ENCODE measurements at regions of chr17 and their contacts with region 1.

Region 1: DNA sequence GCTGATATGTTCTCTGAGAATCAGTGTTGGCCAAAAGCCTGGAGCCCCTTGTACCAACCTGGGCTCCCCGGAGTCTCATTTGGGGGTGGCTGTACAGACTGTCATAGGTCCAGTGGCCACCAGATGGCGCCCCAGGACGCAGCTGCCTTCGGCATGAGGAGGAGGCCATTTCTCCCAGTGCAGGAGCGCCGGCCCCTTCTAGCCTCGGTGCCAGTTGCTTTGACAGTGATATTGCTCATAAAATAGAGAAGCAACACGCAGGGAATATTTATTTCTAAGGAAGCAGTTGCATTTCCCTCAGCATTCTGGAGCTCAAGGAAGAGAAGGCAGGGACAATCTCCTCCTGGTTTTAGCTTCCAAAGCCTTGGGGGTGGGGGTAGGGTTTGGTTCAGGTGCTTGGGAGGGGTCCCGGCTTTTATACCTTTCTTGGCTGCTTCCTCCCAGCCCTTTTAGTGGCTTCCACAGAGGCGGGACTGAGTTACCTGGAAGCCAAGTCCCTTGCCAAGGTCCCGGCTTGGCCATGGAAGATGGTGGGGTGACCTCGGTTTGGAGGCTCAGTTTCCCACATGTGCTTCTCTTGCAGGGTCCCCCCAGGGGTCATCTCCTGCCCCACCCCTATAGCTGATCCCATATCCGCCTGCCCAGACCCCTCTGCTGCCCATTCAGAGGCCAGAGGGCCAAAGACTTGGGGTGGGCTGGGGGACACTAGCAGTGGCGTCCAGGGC is 117.8 kb upstream of the CDC42EP4 start:
- DNase-seq: peak; percentile 62
- ATAC-seq: peak; percentile 99
- H3K4me3 ChIP-seq: no peak overlapping the region; a peak in 1 of 4 replicates
- H3K27ac ChIP-seq: no peak overlapping the region
- H3K4me1 ChIP-seq: peaks cover 0 to 4% of the 10 kb centered on the region in 2 experiments; a peak in 2 of 4 replicates
- H3K27me3 ChIP-seq: 0 out of 2 replicates have a peak, but pooled peaks cover 4% of the 10 kb centered on the region
- CTCF ChIP-seq: peak; percentile 92 to 100 (median 100)
- POLR2A ChIP-seq: no peak
- RAD21 ChIP-seq: peak; percentile 98

Region 2: DNA sequence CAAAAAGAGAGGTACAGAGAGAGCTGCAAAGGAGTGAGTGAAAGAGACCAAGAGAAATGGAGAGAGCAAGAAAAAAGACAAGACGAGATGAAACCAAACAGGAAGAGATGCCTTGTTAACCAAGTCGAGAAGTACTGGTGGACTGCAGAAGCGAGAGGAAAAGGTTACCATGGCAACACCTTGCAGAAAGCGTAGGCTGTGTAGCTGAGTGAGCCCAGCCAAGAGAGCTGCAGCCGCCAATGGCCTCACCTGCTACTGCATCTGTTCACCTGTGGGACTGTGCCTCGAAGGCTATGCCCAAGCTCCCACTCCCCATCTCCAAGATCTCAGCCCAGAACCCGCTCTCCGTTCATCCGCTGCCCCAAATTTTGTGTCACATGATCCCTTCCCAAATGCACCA is 498.4 kb before region 1 on chr17:
- CTCF ChIA-PET with region 1: no interaction called
- POLR2A ChIA-PET with region 1: no interaction called
- RAD21 ChIA-PET with region 1: no interaction called
- intact Hi-C with region 1: no loop called
- DNase-seq: no peak
- ATAC-seq: no peak
- H3K4me3 ChIP-seq: no peak overlapping the region
- H3K27ac ChIP-seq: no peak overlapping the region
- H3K4me1 ChIP-seq: peaks cover 0 to 10% of the 10 kb centered on the region in 2 experiments; a peak in 2 of 4 replicates
- H3K27me3 ChIP-seq: no peaks in the 10 kb centered on the region
- CTCF ChIP-seq: no peak
- POLR2A ChIP-seq: no peak
- RAD21 ChIP-seq: no peak

Region 3: GRCh38 chr17:73595479-73595878 is 165.9 kb after region 1 on chr17:
- CTCF ChIA-PET with region 1: no interaction called
- POLR2A ChIA-PET with region 1: no interaction called
- RAD21 ChIA-PET with region 1: no interaction called
- intact Hi-C with region 1: loop called (anchors 1 kb)
- DNase-seq: no peak
- ATAC-seq: peak; percentile 88
- H3K4me3 ChIP-seq: no peak overlapping the region
- H3K27ac ChIP-seq: no peak overlapping the region
- H3K4me1 ChIP-seq: no peaks in the 10 kb centered on the region
- H3K27me3 ChIP-seq: no peaks in the 10 kb centered on the region
- CTCF ChIP-seq: peak; percentile 53 to 75 (median 74); a peak in 5 of 6 replicates
- POLR2A ChIP-seq: no peak
- RAD21 ChIP-seq: peak; percentile 74

Region 4: DNA sequence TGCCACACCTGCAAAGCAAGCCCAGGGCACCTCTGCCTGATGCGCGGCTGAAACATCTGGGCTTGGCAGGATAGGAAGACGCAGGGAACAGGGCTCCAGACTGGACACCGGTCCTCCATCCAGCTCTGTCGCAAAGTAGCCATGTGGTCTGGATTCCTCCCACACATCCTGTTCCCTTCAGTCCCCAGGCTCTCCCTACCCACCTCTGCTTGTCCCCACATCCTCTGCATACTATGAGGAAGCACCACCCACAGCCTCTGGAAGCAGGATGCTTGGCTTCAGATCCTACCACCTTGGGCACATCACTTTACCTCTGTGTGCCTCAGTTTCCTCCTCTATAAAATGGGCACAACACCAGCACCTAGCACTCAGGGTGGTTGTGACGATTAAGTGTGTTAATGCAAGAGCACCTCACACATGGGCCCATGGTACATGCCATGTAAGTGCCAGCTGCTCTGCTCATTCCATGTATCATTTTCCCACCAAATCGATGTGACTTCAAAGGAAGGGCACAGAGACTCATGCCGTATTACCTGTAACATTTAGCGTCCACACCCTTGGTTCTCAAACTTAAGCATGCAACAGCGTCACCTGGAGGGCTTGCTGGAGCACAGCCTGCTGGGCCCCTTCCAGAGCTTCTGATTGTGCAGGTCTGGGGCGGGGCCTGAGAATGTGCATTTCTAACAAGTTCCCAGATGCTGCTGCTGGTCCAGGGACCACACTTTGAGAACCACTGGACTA is 353.2 kb after region 1 on chr17:
- CTCF ChIA-PET with region 1: interaction called, 4 read pairs
- POLR2A ChIA-PET with region 1: no interaction called
- RAD21 ChIA-PET with region 1: no interaction called
- intact Hi-C with region 1: loop called (anchors 1 kb)
- DNase-seq: peak; percentile 74
- ATAC-seq: peak; percentile 87
- H3K4me3 ChIP-seq: no peak overlapping the region
- H3K27ac ChIP-seq: no peak overlapping the region
- H3K4me1 ChIP-seq: peaks cover 0 to 8% of the 10 kb centered on the region in 2 experiments; a peak in 2 of 4 replicates
- H3K27me3 ChIP-seq: peaks cover 61% of the 10 kb centered on the region; the same call in 1 of the 2 replicates
- CTCF ChIP-seq: peak; percentile 73 to 96 (median 91)
- POLR2A ChIP-seq: no peak
- RAD21 ChIP-seq: peak; percentile 86

Region 5: GRCh38 chr17:73956669-73957465 is 527.3 kb after region 1 on chr17:
- CTCF ChIA-PET with region 1: interaction called, 4 read pairs
- POLR2A ChIA-PET with region 1: no interaction called
- RAD21 ChIA-PET with region 1: no interaction called
- intact Hi-C with region 1: loop called (anchors 1 kb)
- DNase-seq: peak; percentile 49
- ATAC-seq: peak; percentile 97
- H3K4me3 ChIP-seq: no peak overlapping the region
- H3K27ac ChIP-seq: no peak overlapping the region
- H3K4me1 ChIP-seq: no peaks in the 10 kb centered on the region
- H3K27me3 ChIP-seq: peaks cover 7% of the 10 kb centered on the region; the same call in 1 of the 2 replicates
- CTCF ChIP-seq: peak; percentile 56 to 95 (median 87); a peak in 5 of 6 replicates
- POLR2A ChIP-seq: no peak
- RAD21 ChIP-seq: peak; percentile 84

Region 6: GRCh38 chr17:74176546-74177001 is 747.0 kb after region 1 on chr17:
- CTCF ChIA-PET with region 1: no interaction called
- POLR2A ChIA-PET with region 1: no interaction called
- RAD21 ChIA-PET with region 1: no interaction called
- intact Hi-C with region 1: loop called (anchors 1 kb)
- DNase-seq: peak; percentile 56
- ATAC-seq: peak; percentile 97
- H3K4me3 ChIP-seq: no peak overlapping the region
- H3K27ac ChIP-seq: no peak overlapping the region
- H3K4me1 ChIP-seq: no peaks in the 10 kb centered on the region
- H3K27me3 ChIP-seq: peaks cover 38% of the 10 kb centered on the region; the same call in 1 of the 2 replicates
- CTCF ChIP-seq: peak; percentile 89 to 99 (median 97)
- POLR2A ChIP-seq: no peak
- RAD21 ChIP-seq: peak; percentile 98